ENCODE measurements at regions of chr14 and their contacts with region 1.

Region 1: DNA sequence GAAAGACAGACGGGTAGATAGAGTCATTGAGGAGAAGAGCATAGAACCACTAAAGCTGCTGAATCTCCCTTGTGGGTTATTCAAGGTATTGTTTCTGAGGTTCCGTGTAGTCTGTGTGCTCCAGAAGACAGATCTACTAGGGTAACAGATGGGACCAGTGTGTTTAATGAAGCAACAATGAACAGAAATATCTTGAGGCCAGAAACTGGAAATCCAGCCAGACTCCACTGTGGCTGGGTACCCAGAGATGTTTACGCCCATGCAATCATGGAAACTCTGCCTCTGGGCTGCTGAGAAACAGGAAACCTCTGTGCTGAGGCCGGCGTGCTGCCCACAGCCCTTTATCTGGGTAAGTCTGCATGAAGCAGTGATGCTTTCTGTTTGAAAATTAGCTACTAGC is 8.3 kb downstream of the PROX2 start:
- DNase-seq: peak; percentile 49
- H3K4me3 Mint-ChIP-seq: no peak overlapping the region
- H3K27ac Mint-ChIP-seq: peak overlapping the region; percentile 2
- H3K4me1 Mint-ChIP-seq: peaks cover 21% of the 10 kb centered on the region
- H3K27me3 Mint-ChIP-seq: no peaks in the 10 kb centered on the region

Region 2: DNA sequence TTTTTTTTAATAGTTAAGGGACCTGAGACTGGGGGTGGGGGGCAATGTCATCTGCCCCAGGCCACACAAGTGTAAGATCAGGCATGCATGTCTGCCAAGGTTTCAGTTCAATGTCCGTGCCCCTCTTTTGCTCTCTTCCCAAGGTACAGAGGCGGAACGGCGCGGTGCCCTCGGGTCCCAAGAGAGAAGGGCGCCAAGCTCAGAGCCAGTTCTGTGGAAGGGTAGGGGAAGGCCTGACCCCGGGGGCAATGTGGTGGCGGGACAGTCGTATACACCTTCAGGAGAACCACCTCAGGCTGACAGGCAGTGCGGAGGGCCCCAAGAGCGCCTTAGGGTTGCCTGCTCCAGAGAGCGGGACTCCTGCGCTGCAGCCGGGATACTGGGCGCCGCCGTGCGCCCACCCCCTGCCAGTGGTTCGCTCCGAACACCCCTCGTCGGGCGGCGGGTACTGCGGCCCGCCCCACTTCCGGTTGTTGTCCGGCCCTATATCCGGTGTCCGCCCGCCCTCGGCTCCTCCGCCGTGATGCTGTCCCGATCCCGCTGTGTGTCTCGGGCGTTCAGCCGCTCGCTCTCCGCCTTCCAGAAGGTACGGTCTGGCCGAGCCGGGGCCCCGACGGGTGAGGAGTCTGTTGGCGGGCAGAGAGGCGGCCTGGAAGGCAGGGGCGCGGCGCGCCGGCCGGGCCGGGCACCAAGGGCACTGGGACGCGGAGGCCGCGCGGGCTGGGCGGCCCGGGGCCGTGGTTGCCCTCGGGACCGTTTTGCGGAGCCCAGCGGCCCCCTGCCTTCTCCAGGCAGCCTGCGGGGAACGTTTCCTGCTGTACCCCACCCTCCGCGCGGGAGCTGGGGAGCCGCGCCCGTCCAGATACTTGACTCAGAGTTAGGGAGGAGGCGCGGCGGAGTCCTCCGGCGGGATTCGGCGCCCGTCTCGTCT is 14.0 kb after region 1 on chr14 and contains the start of gene DLST:
- intact Hi-C with region 1: loop called (anchors 2 kb)
- DNase-seq: peak; percentile 84
- H3K4me3 Mint-ChIP-seq: peak within 1 kb of the TSS; percentile 100
- H3K27ac Mint-ChIP-seq: peak within 1 kb of the TSS; percentile 97
- H3K4me1 Mint-ChIP-seq: peaks cover 43% of the 10 kb centered on the region
- H3K27me3 Mint-ChIP-seq: no peaks in the 10 kb centered on the region
- total RNA-seq, gene DLST: 102 and 103 TPM in 2 replicates

Region 3: DNA sequence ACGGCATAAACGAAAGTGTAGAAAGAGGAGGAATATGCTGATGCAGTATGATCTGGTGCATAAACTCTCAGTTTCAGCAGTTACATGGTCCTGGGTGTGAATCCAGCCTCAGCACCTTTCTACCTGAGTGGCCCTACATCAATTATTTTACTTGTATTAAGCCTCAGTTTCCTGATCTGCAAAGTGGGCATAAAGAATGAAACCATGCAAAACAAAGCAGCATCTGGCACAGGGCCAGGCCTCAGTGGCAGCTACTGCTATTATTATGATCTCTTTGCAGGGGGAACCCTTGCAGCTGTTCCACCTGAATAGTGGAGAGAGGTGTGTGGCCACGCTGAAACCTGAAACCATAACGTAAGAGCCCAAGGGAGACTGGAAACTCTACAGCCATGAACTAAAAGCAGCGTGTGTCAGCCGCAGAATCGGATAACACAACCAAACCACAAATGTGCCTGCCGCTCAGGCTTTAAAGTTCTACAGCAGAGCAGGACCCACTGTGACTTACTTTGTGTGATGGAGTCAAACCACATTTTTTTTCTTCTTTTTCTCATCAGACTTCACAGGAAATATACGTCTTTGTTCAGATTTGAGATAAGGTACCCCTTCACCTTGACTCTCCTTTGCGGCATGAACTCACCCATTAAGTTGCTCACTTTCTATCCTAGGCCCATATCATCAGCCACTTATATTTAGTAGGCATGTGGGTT is 381.7 kb after region 1 on chr14:
- intact Hi-C with region 1: no loop called
- DNase-seq: peak; percentile 88
- H3K4me3 Mint-ChIP-seq: peak overlapping the region; percentile 37
- H3K27ac Mint-ChIP-seq: peak overlapping the region; percentile 68
- H3K4me1 Mint-ChIP-seq: peaks cover 48% of the 10 kb centered on the region
- H3K27me3 Mint-ChIP-seq: peaks cover 37% of the 10 kb centered on the region